Activated CD4-positive, alpha-beta memory T cell treated with anti-CD3 and anti-CD28 coated beads for 36 hours (primary cell): ENCODE measurements at regions of chr7 and their contacts with region 1.

Region 1: GRCh38 chr7:130896898-130897514 is 163.0 kb upstream of the KLF14 start:
- DNase-seq: peak; percentile 84
- H3K4me3 Mint-ChIP-seq: peak overlapping the region; percentile 43
- H3K27ac Mint-ChIP-seq: peak overlapping the region; percentile 89
- H3K4me1 Mint-ChIP-seq: peaks cover 95% of the 10 kb centered on the region
- H3K27me3 Mint-ChIP-seq: peaks cover 6% of the 10 kb centered on the region

Region 2: DNA sequence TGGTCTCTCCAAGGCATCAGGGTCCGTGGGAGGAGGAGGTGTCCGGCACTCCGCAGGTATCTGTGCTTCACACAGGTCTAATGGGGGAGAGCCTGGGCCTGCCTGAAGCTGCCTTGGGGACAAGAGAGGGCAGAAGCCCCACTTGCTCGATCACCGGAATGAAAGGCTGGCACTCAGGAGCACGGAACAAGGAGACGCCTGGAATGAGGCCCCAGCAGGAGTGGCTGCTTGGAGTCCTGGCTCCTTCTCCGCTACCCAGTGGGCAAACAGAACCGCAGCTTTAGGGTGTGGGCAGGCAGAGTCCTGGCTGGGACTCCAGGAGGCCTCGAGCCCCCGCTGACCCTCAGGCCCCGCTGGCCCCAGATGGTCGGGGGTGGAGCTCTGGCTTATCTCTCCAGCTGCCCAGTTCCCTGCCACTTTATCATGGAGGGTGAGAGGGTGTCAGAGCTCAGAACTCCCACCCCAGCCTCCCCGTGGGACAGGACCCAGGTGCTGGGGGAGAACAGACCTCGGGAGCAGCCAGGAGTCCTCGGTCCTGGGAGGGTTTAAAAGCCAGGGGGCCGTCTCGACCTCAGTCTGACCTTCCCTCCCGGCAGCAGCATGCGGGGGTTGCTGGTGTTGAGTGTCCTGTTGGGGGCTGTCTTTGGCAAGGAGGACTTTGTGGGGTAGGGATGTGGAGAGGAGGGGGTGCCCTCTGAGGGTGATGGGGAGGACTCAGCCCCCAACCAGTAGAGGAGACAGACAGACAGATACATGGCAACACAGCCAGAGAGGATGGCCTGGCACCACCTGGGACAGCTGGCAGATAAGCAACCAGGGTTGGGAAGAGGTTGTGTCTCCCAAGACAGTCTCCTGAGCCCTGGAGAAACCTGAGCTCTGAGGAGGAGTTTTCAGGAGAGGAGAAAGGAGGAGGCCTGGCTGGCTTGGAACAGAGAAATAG is 516.8 kb before region 1 on chr7 and contains the start of gene CPA1:
- CTCF ChIA-PET with region 1: no interaction called
- POLR2A ChIA-PET with region 1: no interaction called
- intact Hi-C with region 1: no loop called
- DNase-seq: no peak
- H3K4me3 Mint-ChIP-seq: no peak within 1 kb of the TSS
- H3K27ac Mint-ChIP-seq: no peak within 1 kb of the TSS
- H3K4me1 Mint-ChIP-seq: no peaks in the 10 kb centered on the region
- H3K27me3 Mint-ChIP-seq: no peaks in the 10 kb centered on the region
- total RNA-seq, gene CPA1: not detected

Region 3: DNA sequence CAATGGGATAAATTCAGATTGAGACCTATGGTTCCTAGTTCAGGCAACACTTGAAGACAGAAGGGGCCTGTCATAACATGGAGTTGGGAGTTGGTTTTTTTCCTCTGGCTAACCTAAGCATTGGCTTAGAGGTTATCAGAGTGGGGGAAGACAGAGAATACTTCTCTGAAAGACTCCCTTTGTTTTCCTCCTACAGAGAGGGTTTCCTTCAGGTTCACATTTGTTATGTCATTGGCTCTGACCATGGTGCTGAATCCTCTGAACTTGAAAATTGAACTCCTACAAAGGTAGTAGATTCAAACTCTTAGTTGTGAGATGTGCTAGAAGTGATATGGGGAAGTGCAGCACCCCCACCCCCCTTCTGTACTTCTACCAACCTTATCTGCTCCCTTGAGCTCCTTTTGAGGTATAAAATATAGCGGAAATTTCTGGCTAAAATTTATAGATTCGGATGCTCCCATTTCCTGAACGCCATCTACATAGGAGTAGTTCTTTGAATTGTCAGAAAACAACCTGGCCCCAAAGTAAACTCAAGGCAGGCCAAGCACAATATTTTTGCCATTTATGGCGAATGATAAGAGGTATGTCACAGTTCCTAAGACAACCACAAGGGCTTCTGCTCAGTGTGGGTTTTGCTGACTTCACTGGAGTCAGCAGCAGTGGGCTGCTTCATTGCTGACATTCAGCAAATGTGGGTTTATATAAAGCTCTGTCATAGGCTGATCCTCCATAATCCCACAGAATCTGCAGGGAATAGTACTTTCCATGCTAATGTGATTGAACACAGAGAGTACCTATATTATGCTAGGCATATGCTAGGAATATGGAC is 31.4 kb before region 1 on chr7:
- CTCF ChIA-PET with region 1: no interaction called
- POLR2A ChIA-PET with region 1: no interaction called
- intact Hi-C with region 1: no loop called
- DNase-seq: no peak
- H3K4me3 Mint-ChIP-seq: no peak overlapping the region
- H3K27ac Mint-ChIP-seq: no peak overlapping the region
- H3K4me1 Mint-ChIP-seq: peaks cover 2% of the 10 kb centered on the region
- H3K27me3 Mint-ChIP-seq: no peaks in the 10 kb centered on the region

Region 4: DNA sequence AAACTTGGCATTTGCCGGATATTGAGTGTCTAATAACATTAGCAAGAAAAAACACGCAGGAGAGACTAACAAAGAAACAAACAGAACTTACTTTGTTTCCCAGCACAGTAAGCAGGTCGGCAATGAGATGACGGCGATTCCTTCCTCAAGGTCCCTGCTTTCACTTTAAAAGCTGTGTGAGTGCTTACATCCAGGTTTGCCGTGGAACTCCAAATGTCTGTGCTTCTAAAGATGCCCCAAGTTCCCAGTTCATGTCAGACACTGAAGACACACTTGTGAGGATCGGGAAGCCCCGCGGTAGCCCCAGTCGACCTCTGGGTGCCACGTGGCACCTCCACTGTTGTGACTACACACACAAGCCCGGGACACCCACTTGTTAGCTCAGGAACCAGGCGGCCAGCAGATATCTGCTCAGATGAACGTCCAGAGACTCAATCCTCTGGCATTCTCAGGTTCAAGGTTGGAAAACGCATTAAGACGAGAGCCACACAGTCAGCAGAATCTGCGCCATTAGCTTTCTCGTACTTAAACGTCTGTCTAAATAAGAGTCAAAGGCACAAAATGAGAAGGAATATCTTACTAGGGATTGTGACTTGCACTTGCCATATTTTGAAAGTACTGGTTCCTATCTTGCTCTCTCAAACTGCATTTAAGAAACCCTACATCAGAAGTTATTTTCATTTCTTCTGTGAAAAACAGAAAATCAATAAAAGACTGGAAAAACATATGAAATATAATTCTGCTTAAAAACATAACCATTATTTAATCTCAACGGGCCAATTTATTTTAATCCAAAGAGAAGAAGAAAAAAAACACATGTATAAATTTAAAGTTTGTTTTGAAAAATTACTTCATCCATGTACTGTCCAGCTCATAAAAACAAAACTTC is 44.6 kb after region 1 on chr7:
- CTCF ChIA-PET with region 1: interaction called, 11 read pairs
- POLR2A ChIA-PET with region 1: interaction called, 3 read pairs
- intact Hi-C with region 1: loop called (anchors 10 kb)
- DNase-seq: peak; percentile 63
- H3K4me3 Mint-ChIP-seq: peak overlapping the region; percentile 66
- H3K27ac Mint-ChIP-seq: peak overlapping the region; percentile 87
- H3K4me1 Mint-ChIP-seq: peaks cover 89% of the 10 kb centered on the region
- H3K27me3 Mint-ChIP-seq: no peaks in the 10 kb centered on the region

Region 5: DNA sequence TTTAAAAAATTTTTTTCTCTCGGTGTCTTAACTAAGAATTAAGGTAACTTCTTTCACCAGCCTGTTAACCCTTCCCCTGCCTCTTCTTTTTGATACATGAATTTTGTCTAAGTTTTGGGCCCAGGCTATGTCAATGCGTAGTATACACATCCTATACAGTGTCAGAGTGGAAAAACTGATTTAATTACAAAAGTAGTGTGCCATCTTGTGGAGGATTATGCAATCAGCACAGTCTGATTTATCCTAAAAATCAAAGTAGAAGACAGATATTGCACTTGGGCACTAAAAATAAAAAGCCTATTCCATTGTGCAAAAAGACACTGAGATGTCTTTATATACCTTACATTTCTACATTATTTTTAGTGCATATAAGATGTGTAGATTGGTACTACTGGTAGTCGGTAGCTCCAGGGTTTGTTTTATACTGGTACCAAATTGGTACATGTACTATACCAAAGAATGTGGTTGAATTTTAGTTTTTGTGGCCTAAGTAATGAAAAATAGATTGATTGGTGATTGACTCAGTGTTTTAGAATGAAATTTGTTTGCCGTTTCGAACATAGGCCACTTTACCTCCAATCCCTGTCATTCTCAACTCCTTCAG is 527.3 kb after region 1 on chr7:
- CTCF ChIA-PET with region 1: no interaction called
- POLR2A ChIA-PET with region 1: no interaction called
- intact Hi-C with region 1: loop called (anchors 10 kb)
- DNase-seq: no peak
- H3K4me3 Mint-ChIP-seq: no peak overlapping the region
- H3K27ac Mint-ChIP-seq: no peak overlapping the region
- H3K4me1 Mint-ChIP-seq: peaks cover 6% of the 10 kb centered on the region
- H3K27me3 Mint-ChIP-seq: no peaks in the 10 kb centered on the region